Activated B cell treated with CpG ODN at 0.5 μM for 24 hours (primary cell): ENCODE measurements at regions of chr6 and their contacts with region 1.

Region 1: DNA sequence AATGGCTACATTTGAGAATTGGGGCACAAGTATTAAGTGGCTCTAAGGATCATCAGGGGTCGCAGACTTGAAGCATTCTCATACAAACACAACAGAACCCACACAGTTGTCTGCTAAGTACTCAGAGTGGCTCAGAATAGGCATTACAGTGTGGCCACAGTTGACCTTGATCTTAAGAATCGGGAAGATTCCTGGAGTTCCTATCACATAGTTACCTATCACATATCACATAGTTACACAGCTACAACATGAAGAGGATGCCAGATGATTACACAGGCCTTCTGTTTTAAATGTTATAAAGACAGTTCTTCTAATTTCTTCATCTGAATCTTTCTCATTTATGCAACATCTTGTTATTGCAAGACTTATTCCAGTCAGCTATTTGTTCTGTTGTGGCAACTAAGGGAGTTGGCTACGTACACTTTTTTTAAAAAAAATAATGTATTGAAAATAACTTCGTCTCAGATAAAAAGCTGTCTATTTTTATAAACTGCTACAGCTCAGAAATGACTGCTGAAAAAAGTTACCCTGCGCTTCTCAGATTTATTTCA is 129.0 kb downstream of the REV3L start:
- DNase-seq: no peak
- ATAC-seq: no peak
- H3K4me3 Mint-ChIP-seq: no peak overlapping the region
- H3K27ac Mint-ChIP-seq: no peak overlapping the region
- H3K4me1 Mint-ChIP-seq: no peaks in the 10 kb centered on the region
- H3K27me3 Mint-ChIP-seq: no peaks in the 10 kb centered on the region
- CTCF ChIP-seq: no peak

Region 2: GRCh38 chr6:111399626-111400025 is 45.6 kb after region 1 on chr6:
- CTCF ChIA-PET with region 1: no interaction called
- POLR2A ChIA-PET with region 1: no interaction called
- intact Hi-C with region 1: loop called (anchors 2 kb)
- DNase-seq: no peak
- ATAC-seq: no peak
- H3K4me3 Mint-ChIP-seq: no peak overlapping the region
- H3K27ac Mint-ChIP-seq: peak overlapping the region; percentile 10
- H3K4me1 Mint-ChIP-seq: peaks cover 14% of the 10 kb centered on the region
- H3K27me3 Mint-ChIP-seq: no peaks in the 10 kb centered on the region
- CTCF ChIP-seq: no peak